Keratinocyte (primary cell): ENCODE measurements at regions of chr11 and their contacts with region 1.

Region 1: GRCh38 chr11:114036156-114036811 is 23.2 kb upstream of the ZBTB16 start:
- DNase-seq: no peak
- H3K4me3 ChIP-seq: no peak overlapping the region
- H3K27ac ChIP-seq: no peak overlapping the region
- H3K4me1 ChIP-seq: peaks cover 3% of the 10 kb centered on the region
- H3K27me3 ChIP-seq: peaks cover 21% of the 10 kb centered on the region
- CTCF ChIP-seq: peak; percentile 56 to 91 (median 89)

Region 2: DNA sequence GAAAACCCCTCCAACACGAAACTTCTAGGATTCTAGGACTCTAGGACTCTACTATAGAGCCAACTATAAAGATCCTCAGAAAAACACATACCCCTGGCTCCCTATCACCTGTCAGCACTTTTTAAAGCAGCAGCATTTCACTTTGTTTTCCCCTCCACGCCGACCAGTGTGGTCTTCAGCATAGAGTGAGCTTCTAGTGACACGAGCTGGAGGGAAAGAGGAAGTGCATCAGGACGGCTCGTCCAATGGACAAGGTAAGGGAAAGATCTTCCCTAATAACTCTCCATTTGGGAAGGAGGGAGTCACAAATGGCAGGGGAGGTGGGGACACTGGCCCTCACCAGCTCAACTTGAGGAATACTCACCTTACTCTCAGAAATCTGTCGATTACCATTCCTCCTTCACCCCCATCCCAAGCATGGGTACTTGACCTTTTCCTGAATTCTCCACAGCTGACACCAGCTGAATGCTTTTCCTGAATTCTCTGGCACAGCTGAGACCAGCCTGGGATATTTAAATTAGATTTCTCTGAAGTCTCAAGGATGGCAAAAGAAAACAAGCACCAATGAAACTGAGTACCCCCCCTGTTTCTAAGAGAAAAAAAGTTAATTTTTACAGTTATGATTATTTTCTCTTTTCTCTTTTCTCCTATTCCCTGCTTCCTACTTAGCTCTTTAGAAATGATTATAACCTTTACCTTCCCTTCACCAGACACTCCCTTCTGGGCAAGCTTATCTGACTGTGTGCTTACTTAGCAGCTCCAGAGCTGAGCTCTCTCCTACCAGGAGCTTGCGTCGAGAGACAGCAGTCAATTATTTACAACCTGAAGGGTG is 226.6 kb after region 1 on chr11:
- dilution Hi-C with region 1: loop called (anchors 25 kb)
- DNase-seq: no peak
- H3K4me3 ChIP-seq: no peak overlapping the region
- H3K27ac ChIP-seq: no peak overlapping the region
- H3K4me1 ChIP-seq: no peaks in the 10 kb centered on the region
- H3K27me3 ChIP-seq: peaks cover 32% of the 10 kb centered on the region
- CTCF ChIP-seq: peak; percentile 35 to 76 (median 59)